ENCODE measurements at regions of chr16 and their contacts with region 1.

Region 1: DNA sequence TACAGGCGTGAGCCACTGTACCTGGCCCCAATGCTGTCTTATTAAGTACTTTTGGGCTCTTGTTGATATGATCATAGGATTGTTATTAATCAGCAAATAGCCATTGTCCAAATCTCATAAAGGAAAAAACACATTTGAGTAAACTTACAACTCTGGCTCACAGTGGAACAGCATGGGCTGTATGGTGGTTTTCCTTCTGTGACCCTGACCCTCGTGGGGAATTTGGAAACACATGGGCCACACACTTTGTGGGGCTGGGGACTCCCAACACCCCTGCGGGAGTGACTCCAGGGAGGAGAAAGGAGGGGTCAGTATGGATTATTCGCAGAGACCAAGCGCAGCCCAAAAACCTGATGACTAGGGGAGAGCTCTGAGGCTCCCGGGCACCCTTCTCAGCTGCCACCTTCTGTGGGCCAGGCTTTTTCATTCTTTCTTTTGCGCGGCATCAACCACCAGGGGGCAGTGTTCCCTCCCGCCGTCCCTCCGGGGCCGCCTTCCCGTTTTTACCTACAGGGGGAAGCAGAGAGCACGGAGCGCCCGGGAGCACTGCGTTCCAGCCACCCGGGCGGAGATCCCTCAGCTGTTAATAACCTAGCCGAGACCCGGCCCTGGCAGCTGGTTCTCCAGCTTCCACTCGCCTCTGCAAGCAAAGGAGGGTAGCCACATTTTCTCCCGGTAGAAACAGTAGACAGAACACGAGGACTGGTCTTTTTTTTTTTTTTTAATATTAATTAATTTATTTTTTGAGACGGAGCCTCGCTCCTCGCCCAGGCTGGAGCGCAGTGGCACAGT is 9.7 kb downstream of the TSNAXIP1 start:
- DNase-seq: peak; percentile 91
- ATAC-seq: peak; percentile 98
- H3K4me3 Mint-ChIP-seq: no peak overlapping the region
- H3K27ac Mint-ChIP-seq: no peak overlapping the region
- H3K4me1 Mint-ChIP-seq: peaks cover 5% of the 10 kb centered on the region
- H3K27me3 Mint-ChIP-seq: peaks cover 5% of the 10 kb centered on the region

Region 2: DNA sequence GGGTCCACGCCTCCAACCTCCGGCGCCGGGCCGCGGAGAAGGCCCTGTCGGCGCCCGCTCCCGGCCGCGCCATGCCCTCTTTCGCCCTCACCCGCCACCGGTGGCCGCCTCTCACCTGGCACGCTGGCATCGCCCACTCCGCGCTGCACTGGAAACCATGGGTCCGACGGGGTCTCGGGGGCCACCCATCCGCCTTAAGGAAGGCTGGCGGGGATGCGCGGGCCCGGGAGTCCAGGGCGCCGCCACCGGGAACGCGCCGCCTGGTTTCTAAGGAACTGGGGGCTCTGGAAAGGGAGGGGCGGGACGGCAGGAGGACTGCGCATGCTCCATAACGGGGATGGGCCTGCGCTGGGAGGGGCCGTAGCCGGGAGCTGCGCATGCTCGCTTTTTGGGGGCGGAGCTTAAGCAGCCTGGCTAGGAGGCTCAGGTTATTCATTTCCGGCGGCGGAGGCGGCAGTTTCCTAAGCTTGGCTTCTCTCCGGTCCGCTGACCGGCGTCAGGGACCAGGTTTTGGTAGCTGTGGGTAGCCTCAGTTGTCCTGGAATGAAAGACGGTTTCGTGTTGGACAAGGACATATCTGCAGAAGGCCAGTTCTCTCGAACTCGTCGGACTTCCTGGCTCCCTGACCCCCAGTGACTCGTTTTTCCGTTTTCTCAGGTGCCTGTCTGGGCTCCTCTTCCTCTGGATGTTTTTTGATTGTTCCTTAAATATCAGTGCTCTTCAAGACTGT is 97.2 kb before region 1 on chr16 and contains the start of gene GFOD2:
- CTCF ChIA-PET with region 1: interaction called, 24 read pairs
- DNase-seq: peak; percentile 98
- ATAC-seq: peak; percentile 95
- H3K4me3 Mint-ChIP-seq: peak within 1 kb of the TSS; percentile 88
- H3K27ac Mint-ChIP-seq: peak within 1 kb of the TSS; percentile 98
- H3K4me1 Mint-ChIP-seq: peaks cover 37% of the 10 kb centered on the region
- H3K27me3 Mint-ChIP-seq: no peaks in the 10 kb centered on the region
- total RNA-seq, gene GFOD2: 15.1 to 15.8 TPM

Region 3: GRCh38 chr16:67800338-67800926 is 16.0 kb before region 1 on chr16:
- CTCF ChIA-PET with region 1: interaction called, 54 read pairs
- DNase-seq: no peak
- ATAC-seq: no peak
- H3K4me3 Mint-ChIP-seq: no peak overlapping the region
- H3K27ac Mint-ChIP-seq: peak overlapping the region; percentile 45
- H3K4me1 Mint-ChIP-seq: peaks cover 50% of the 10 kb centered on the region
- H3K27me3 Mint-ChIP-seq: no peaks in the 10 kb centered on the region

Region 4: GRCh38 chr16:67865316-67865715 is 48.9 kb after region 1 on chr16:
- CTCF ChIA-PET with region 1: interaction called, 71 read pairs
- DNase-seq: no peak
- ATAC-seq: peak; percentile 54
- H3K4me3 Mint-ChIP-seq: no peak overlapping the region
- H3K27ac Mint-ChIP-seq: peak overlapping the region; percentile 56
- H3K4me1 Mint-ChIP-seq: peaks cover 5% of the 10 kb centered on the region
- H3K27me3 Mint-ChIP-seq: no peaks in the 10 kb centered on the region

Region 5: GRCh38 chr16:67910158-67910557 is 93.7 kb after region 1 on chr16:
- CTCF ChIA-PET with region 1: interaction called, 13 read pairs
- DNase-seq: peak; percentile 73
- ATAC-seq: peak; percentile 95
- H3K4me3 Mint-ChIP-seq: no peak overlapping the region
- H3K27ac Mint-ChIP-seq: peak overlapping the region; percentile 47
- H3K4me1 Mint-ChIP-seq: peaks cover 17% of the 10 kb centered on the region
- H3K27me3 Mint-ChIP-seq: no peaks in the 10 kb centered on the region

Region 6: GRCh38 chr16:67935402-67936123 is 119.1 kb after region 1 on chr16:
- CTCF ChIA-PET with region 1: interaction called, 35 read pairs
- DNase-seq: peak; percentile 98
- ATAC-seq: peak; percentile 88
- H3K4me3 Mint-ChIP-seq: peak overlapping the region; percentile 99
- H3K27ac Mint-ChIP-seq: peak overlapping the region; percentile 98
- H3K4me1 Mint-ChIP-seq: peaks cover 37% of the 10 kb centered on the region
- H3K27me3 Mint-ChIP-seq: no peaks in the 10 kb centered on the region

Region 7: GRCh38 chr16:68247400-68247799 is 431.0 kb after region 1 on chr16:
- CTCF ChIA-PET with region 1: no interaction called
- DNase-seq: no peak
- ATAC-seq: no peak
- H3K4me3 Mint-ChIP-seq: no peak overlapping the region
- H3K27ac Mint-ChIP-seq: no peak overlapping the region
- H3K4me1 Mint-ChIP-seq: peaks cover 21% of the 10 kb centered on the region
- H3K27me3 Mint-ChIP-seq: no peaks in the 10 kb centered on the region

Measured in activated CD8-positive, alpha-beta memory T cell treated with anti-CD3 and anti-CD28 coated beads, Interleukin-2, amount 10 ng/mL, durations not matched to agents 7 days and 5 days (primary cell).